Activated naive CD4-positive, alpha-beta T cell treated with anti-CD3 and anti-CD28 coated beads for 36 hours (primary cell): ENCODE measurements at regions of chr2 and their contacts with region 1.

Region 1: DNA sequence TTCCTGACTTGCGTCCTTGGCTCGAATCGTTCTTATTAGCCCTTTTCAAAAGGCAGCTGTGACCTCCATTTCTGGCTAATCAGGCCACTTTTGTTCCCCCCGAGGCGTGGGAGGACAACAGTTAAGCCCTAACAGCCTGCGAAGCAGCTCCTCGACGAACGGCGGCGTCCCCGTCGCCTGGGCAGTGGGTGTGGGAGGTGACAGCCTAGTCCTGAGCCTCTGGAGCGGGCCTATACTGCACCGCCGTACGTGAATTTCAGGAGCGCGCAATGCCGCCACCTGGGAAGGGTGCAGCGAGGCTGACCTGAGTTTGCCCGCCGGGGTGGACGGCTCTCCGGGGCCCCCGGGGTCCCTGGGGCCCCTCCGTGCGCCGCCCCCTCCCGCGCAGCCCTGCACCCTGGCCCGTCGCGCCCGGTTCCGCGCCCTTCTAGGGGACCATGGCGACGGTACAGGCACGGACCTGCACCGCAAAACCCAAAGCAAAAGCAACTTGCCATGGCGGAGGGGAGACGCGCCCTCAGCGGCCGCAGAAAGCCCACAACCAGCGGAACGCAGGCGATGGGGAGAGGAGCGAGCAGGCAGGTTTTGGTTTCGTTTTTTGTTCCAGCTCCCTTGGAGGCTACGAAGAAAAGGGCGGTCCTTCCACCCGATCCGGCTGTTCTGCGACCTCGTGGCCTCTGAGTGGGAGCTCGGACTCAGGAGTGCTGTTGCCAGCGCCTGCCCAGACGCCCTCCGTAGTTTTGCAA is at the start of gene RBM43:
- DNase-seq: peak; percentile 81
- H3K4me3 Mint-ChIP-seq: peak within 1 kb of the TSS; percentile 87
- H3K27ac Mint-ChIP-seq: peak within 1 kb of the TSS; percentile 87
- H3K4me1 Mint-ChIP-seq: peaks cover 18% of the 10 kb centered on the region
- H3K27me3 Mint-ChIP-seq: no peaks in the 10 kb centered on the region
- total RNA-seq, gene RBM43: 3.4 to 3.8 TPM

Region 2: DNA sequence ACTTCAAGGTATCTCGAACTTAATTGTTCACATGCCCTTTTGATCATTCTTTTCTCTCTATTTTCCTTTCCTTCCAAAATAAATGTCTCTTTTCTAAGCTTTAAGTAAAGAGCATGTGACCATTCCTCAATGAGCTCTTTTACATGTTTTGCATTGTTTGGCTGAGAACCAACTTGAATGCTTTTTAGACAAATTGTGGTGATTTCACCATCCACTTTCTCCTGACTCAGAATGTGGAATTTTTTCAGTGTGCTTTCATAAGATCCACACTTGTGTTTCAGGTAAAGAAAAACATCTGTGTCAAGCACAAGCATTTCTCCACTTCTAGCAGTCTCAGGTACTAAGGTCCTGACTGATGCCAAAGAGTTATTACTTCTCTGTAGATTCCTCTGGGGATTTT is 10.4 kb before region 1 on chr2:
- CTCF ChIA-PET with region 1: no interaction called
- intact Hi-C with region 1: no loop called
- DNase-seq: no peak
- H3K4me3 Mint-ChIP-seq: no peak overlapping the region
- H3K27ac Mint-ChIP-seq: no peak overlapping the region
- H3K4me1 Mint-ChIP-seq: no peaks in the 10 kb centered on the region
- H3K27me3 Mint-ChIP-seq: no peaks in the 10 kb centered on the region

Region 3: GRCh38 chr2:151409601-151410484 is 148.4 kb after region 1 on chr2 and contains the start of gene RIF1:
- CTCF ChIA-PET with region 1: interaction called, 5 read pairs
- intact Hi-C with region 1: loop called (anchors 1 kb)
- DNase-seq: peak; percentile 88
- H3K4me3 Mint-ChIP-seq: peak within 1 kb of the TSS; percentile 100
- H3K27ac Mint-ChIP-seq: peak within 1 kb of the TSS; percentile 95
- H3K4me1 Mint-ChIP-seq: peaks cover 18% of the 10 kb centered on the region
- H3K27me3 Mint-ChIP-seq: no peaks in the 10 kb centered on the region
- total RNA-seq, gene RIF1: 53.0 TPM